ENCODE measurements at regions of chr12 and their contacts with region 1.

Region 1: DNA sequence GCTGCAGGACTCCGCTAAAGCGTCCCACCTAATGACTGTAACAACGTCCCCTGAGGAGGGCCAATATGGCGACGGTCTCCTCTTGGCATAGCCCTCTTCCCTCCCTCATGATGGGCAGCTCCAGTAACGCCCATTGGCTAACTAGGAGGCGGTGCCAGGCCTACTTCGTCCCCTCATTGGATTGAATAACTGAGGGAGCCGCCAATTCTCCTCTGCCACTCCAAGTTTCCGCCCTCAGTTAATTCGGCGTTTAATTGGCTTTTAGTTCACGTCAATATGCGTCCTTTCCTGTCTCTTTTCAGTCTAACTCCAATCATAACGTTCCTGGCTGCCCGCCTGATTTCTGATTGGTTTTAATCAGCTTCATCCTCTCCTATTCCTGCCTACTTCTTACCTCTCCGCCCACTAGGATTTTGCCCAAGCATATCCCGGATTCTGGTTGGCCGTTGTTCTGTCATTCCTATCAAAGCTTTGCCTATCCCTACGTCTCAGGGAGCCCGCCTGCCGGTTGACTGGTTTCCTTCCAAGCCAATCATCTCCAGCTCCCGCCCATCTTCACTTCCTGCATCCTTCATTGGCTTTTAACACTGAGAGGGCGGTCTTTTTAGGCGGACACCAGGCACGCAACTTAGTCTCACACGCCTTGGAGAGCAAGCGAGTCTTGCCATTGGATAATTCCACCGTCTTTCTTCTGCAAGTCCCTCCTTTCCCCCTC is 430 bp upstream of the SP1 start:
- DNase-seq: peak; percentile 99
- ATAC-seq: peak; percentile 77
- H3K4me3 Mint-ChIP-seq: no peak overlapping the region
- H3K27ac Mint-ChIP-seq: no peak overlapping the region
- H3K4me1 Mint-ChIP-seq: peaks cover 34% of the 10 kb centered on the region
- H3K27me3 Mint-ChIP-seq: no peaks in the 10 kb centered on the region

Region 2: DNA sequence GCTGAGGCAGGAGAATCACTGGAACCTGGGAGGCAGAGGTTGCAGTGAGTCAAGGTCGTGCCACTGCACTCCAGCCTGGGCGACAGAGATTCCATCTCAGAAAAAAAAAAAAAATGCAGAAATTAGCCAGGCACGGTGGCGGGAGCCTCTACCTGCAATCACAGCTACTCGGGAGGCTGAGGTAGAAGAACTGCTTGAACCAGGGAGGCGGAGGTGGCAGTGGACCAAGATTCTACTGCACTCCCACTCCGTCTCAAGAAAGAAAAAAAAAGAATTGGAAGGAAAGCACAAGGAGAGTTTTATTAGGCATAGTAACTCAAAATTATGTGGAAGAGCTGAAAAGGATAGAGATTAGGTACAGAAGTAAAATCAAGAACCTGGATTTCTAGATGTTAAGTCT is 23.3 kb after region 1 on chr12:
- CTCF ChIA-PET with region 1: interaction called, 15 read pairs
- DNase-seq: no peak
- ATAC-seq: no peak
- H3K4me3 Mint-ChIP-seq: no peak overlapping the region
- H3K27ac Mint-ChIP-seq: no peak overlapping the region
- H3K4me1 Mint-ChIP-seq: peaks cover 2% of the 10 kb centered on the region
- H3K27me3 Mint-ChIP-seq: no peaks in the 10 kb centered on the region

Measured in activated CD8-positive, alpha-beta memory T cell treated with anti-CD3 and anti-CD28 coated beads, Interleukin-2, amount 10 ng/mL, durations not matched to agents 7 days and 5 days (primary cell).